Natural killer cell (primary cell): ENCODE measurements at regions of chr16 and their contacts with region 1.

Region 1: GRCh38 chr16:79601931-79602627 is 1.5 kb upstream of the MAF start:
- DNase-seq: peak; percentile 75 to 92
- ATAC-seq: no peak
- H3K4me3 ChIP-seq: peak overlapping the region; percentile 69
- H3K4me3 Mint-ChIP-seq: peak overlapping the region; percentile 99
- H3K27ac ChIP-seq: no peak overlapping the region
- H3K27ac Mint-ChIP-seq: peak overlapping the region; percentile 89 to 96
- H3K4me1 ChIP-seq: peaks cover 23% of the 10 kb centered on the region
- H3K4me1 Mint-ChIP-seq: peaks cover 27 to 31% of the 10 kb centered on the region in 2 donors
- H3K27me3 ChIP-seq: no peaks in the 10 kb centered on the region
- H3K27me3 Mint-ChIP-seq: peaks cover 0 to 19% of the 10 kb centered on the region in 2 donors
- CTCF ChIP-seq: peak; percentile 88

Region 2: GRCh38 chr16:78134929-78135619 is 1467.0 kb before region 1 on chr16:
- intact Hi-C with region 1: loop called (anchors 10 kb)
- DNase-seq: peak in 1 of 2 donors; percentile 11
- ATAC-seq: peak; percentile 82 to 96 (median 88)
- H3K4me3 ChIP-seq: no peak overlapping the region
- H3K4me3 Mint-ChIP-seq: peak overlapping the region; percentile 10
- H3K27ac ChIP-seq: no peak overlapping the region
- H3K27ac Mint-ChIP-seq: peak overlapping the region; percentile 10 to 61
- H3K4me1 ChIP-seq: peaks cover 4% of the 10 kb centered on the region
- H3K4me1 Mint-ChIP-seq: peaks cover 27 to 37% of the 10 kb centered on the region in 2 donors
- H3K27me3 ChIP-seq: no peaks in the 10 kb centered on the region
- H3K27me3 Mint-ChIP-seq: no peaks in the 10 kb centered on the region
- CTCF ChIP-seq: no peak

Region 3: GRCh38 chr16:78503602-78504001 is 1098.5 kb before region 1 on chr16:
- intact Hi-C with region 1: loop called (anchors 1 kb)
- DNase-seq: peak in 1 of 2 donors; percentile 76
- ATAC-seq: peak in 2 of 3 donors; percentile 52 to 58
- H3K4me3 ChIP-seq: no peak overlapping the region
- H3K4me3 Mint-ChIP-seq: no peak overlapping the region
- H3K27ac ChIP-seq: no peak overlapping the region
- H3K27ac Mint-ChIP-seq: no peak overlapping the region
- H3K4me1 ChIP-seq: no peaks in the 10 kb centered on the region
- H3K4me1 Mint-ChIP-seq: no peaks in the 10 kb centered on the region
- H3K27me3 ChIP-seq: no peaks in the 10 kb centered on the region
- H3K27me3 Mint-ChIP-seq: no peaks in the 10 kb centered on the region
- CTCF ChIP-seq: peak; percentile 86

Region 4: GRCh38 chr16:78925083-78925767 is 676.9 kb before region 1 on chr16:
- intact Hi-C with region 1: loop called (anchors 1 kb)
- DNase-seq: peak in 1 of 2 donors; percentile 54
- ATAC-seq: peak; percentile 35 to 75 (median 38)
- H3K4me3 ChIP-seq: no peak overlapping the region
- H3K4me3 Mint-ChIP-seq: no peak overlapping the region
- H3K27ac ChIP-seq: no peak overlapping the region
- H3K27ac Mint-ChIP-seq: no peak overlapping the region
- H3K4me1 ChIP-seq: no peaks in the 10 kb centered on the region
- H3K4me1 Mint-ChIP-seq: peaks cover 5 to 11% of the 10 kb centered on the region in 2 donors
- H3K27me3 ChIP-seq: no peaks in the 10 kb centered on the region
- H3K27me3 Mint-ChIP-seq: peaks cover 3 to 11% of the 10 kb centered on the region in 2 donors
- CTCF ChIP-seq: peak; percentile 38

Region 5: DNA sequence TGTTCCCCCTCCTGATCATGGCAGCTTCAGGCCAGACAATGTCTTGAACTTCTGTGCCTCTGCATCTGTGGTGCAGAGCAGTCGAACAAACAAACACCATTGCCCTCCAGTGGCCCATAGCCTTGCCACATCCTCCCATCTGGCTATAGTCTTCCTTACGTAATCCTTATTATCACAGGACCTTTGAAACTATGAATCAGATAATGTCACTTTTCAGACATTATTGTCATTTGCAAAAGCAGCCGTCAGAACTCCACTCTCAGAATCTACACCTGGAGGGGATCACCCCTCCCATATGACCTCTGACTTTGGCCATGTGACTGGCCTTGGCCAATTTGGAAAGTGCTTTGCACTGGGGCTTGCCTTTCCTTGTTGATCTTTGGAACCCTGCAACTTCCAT is 388.9 kb before region 1 on chr16:
- intact Hi-C with region 1: loop called (anchors 10 kb)
- DNase-seq: no peak
- ATAC-seq: peak; percentile 66 to 86 (median 81)
- H3K4me3 ChIP-seq: no peak overlapping the region
- H3K4me3 Mint-ChIP-seq: no peak overlapping the region
- H3K27ac ChIP-seq: no peak overlapping the region
- H3K27ac Mint-ChIP-seq: peak overlapping the region in 1 of 2 donors; percentile 2
- H3K4me1 ChIP-seq: peaks cover 6% of the 10 kb centered on the region
- H3K4me1 Mint-ChIP-seq: peaks cover 17 to 31% of the 10 kb centered on the region in 2 donors
- H3K27me3 ChIP-seq: no peaks in the 10 kb centered on the region
- H3K27me3 Mint-ChIP-seq: no peaks in the 10 kb centered on the region
- CTCF ChIP-seq: peak; percentile 47

Region 6: GRCh38 chr16:79381552-79382042 is 220.5 kb before region 1 on chr16:
- intact Hi-C with region 1: loop called (anchors 10 kb)
- DNase-seq: peak; percentile 24 to 58
- ATAC-seq: peak; percentile 60 to 69 (median 68)
- H3K4me3 ChIP-seq: peak overlapping the region; percentile 2
- H3K4me3 Mint-ChIP-seq: peak overlapping the region; percentile 86
- H3K27ac ChIP-seq: peak overlapping the region; percentile 70
- H3K27ac Mint-ChIP-seq: peak overlapping the region; percentile 88 to 91
- H3K4me1 ChIP-seq: peaks cover 13% of the 10 kb centered on the region
- H3K4me1 Mint-ChIP-seq: peaks cover 37 to 40% of the 10 kb centered on the region in 2 donors
- H3K27me3 ChIP-seq: no peaks in the 10 kb centered on the region
- H3K27me3 Mint-ChIP-seq: no peaks in the 10 kb centered on the region
- CTCF ChIP-seq: no peak

Region 7: GRCh38 chr16:79658301-79659033 is 56.4 kb after region 1 on chr16:
- intact Hi-C with region 1: no loop called
- DNase-seq: no peak
- ATAC-seq: no peak
- H3K4me3 ChIP-seq: no peak overlapping the region
- H3K4me3 Mint-ChIP-seq: no peak overlapping the region
- H3K27ac ChIP-seq: no peak overlapping the region
- H3K27ac Mint-ChIP-seq: no peak overlapping the region
- H3K4me1 ChIP-seq: no peaks in the 10 kb centered on the region
- H3K4me1 Mint-ChIP-seq: no peaks in the 10 kb centered on the region
- H3K27me3 ChIP-seq: no peaks in the 10 kb centered on the region
- H3K27me3 Mint-ChIP-seq: peaks cover 0 to 5% of the 10 kb centered on the region in 2 donors
- CTCF ChIP-seq: no peak